ENCODE measurements at regions of chr18 and their contacts with region 1.

Region 1: GRCh38 chr18:69064063-69064462 is 266.2 kb downstream of the CCDC102B start:
- DNase-seq: no peak
- H3K4me3 Mint-ChIP-seq: no peak overlapping the region
- H3K27ac Mint-ChIP-seq: peak overlapping the region; percentile 15
- H3K4me1 Mint-ChIP-seq: peaks cover 9% of the 10 kb centered on the region
- H3K27me3 Mint-ChIP-seq: no peaks in the 10 kb centered on the region
- CTCF ChIP-seq: no peak

Region 2: GRCh38 chr18:68948622-68949021 is 115.4 kb before region 1 on chr18:
- CTCF ChIA-PET with region 1: no interaction called
- intact Hi-C with region 1: loop called (anchors 5 kb)
- DNase-seq: no peak
- H3K4me3 Mint-ChIP-seq: peak overlapping the region; percentile 31
- H3K27ac Mint-ChIP-seq: no peak overlapping the region
- H3K4me1 Mint-ChIP-seq: peaks cover 15% of the 10 kb centered on the region
- H3K27me3 Mint-ChIP-seq: no peaks in the 10 kb centered on the region
- CTCF ChIP-seq: no peak

Region 3: GRCh38 chr18:69002233-69002632 is 61.8 kb before region 1 on chr18:
- CTCF ChIA-PET with region 1: no interaction called
- intact Hi-C with region 1: loop called (anchors 10 kb)
- DNase-seq: no peak
- H3K4me3 Mint-ChIP-seq: no peak overlapping the region
- H3K27ac Mint-ChIP-seq: no peak overlapping the region
- H3K4me1 Mint-ChIP-seq: no peaks in the 10 kb centered on the region
- H3K27me3 Mint-ChIP-seq: no peaks in the 10 kb centered on the region
- CTCF ChIP-seq: no peak